Activated naive CD4-positive, alpha-beta T cell treated with anti-CD3 and anti-CD28 coated beads for 36 hours (primary cell): ENCODE measurements at regions of chr9 and their contacts with region 1.

Region 1: GRCh38 chr9:125746017-125746773 is 978 bp upstream of the PBX3 start:
- DNase-seq: peak; percentile 93
- H3K4me3 Mint-ChIP-seq: peak overlapping the region; percentile 91
- H3K27ac Mint-ChIP-seq: peak overlapping the region; percentile 90
- H3K4me1 Mint-ChIP-seq: peaks cover 25% of the 10 kb centered on the region
- H3K27me3 Mint-ChIP-seq: peaks cover 6% of the 10 kb centered on the region

Region 2: DNA sequence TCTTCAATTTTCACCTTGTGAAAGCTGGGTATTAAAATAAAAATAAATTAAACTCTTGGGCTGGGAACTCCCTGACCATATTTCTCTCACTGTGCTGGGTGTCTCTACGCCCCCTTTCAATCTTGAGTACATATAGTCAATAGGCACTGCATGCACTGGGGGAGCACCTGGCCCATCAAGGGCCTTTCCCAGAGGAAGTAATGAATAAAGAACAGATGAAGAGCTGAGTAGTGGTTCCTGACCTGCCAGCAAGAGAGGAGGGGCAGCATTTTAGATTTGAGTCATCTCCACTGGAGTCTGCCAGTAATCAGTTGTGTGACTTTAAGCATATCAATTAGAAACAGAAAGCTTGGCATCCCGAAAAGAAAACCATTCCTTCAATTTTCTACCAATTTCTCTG is 45.4 kb before region 1 on chr9:
- CTCF ChIA-PET with region 1: no interaction called
- intact Hi-C with region 1: loop called (anchors 1 kb)
- DNase-seq: peak; percentile 80
- H3K4me3 Mint-ChIP-seq: no peak overlapping the region
- H3K27ac Mint-ChIP-seq: peak overlapping the region; percentile 47
- H3K4me1 Mint-ChIP-seq: peaks cover 58% of the 10 kb centered on the region
- H3K27me3 Mint-ChIP-seq: no peaks in the 10 kb centered on the region

Region 3: GRCh38 chr9:125706661-125707471 is 39.3 kb before region 1 on chr9 and contains the start of gene MAPKAP1:
- CTCF ChIA-PET with region 1: no interaction called
- intact Hi-C with region 1: loop called (anchors 1 kb)
- DNase-seq: peak; percentile 96
- H3K4me3 Mint-ChIP-seq: peak within 1 kb of the TSS; percentile 83
- H3K27ac Mint-ChIP-seq: peak within 1 kb of the TSS; percentile 87
- H3K4me1 Mint-ChIP-seq: peaks cover 38% of the 10 kb centered on the region
- H3K27me3 Mint-ChIP-seq: no peaks in the 10 kb centered on the region
- total RNA-seq, gene MAPKAP1: 54.8 to 57.4 TPM

Region 4: GRCh38 chr9:125732562-125732961 is 13.6 kb before region 1 on chr9:
- CTCF ChIA-PET with region 1: no interaction called
- intact Hi-C with region 1: no loop called
- DNase-seq: no peak
- H3K4me3 Mint-ChIP-seq: no peak overlapping the region
- H3K27ac Mint-ChIP-seq: no peak overlapping the region
- H3K4me1 Mint-ChIP-seq: no peaks in the 10 kb centered on the region
- H3K27me3 Mint-ChIP-seq: no peaks in the 10 kb centered on the region

Region 5: DNA sequence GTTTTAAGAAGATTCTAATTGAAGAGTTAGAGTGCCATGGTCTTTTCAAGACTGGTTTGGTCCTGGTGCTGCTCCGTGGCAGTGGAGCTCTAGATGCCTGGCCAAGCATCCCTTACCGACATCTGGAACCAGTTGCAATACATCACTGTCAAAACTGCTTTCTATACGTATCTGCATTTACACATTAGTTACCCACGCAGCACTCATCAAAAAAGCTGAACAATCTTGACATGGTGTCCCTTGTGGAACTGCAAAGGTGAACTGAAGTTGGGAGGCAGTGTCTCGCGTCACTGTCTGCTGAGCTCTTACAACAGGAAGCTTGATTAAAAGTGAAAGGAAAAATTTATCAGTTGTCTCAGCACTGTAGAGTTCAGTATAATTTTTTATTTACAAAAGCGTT is 83.5 kb after region 1 on chr9:
- CTCF ChIA-PET with region 1: no interaction called
- intact Hi-C with region 1: loop called (anchors 1 kb)
- DNase-seq: peak; percentile 73
- H3K4me3 Mint-ChIP-seq: peak overlapping the region; percentile 77
- H3K27ac Mint-ChIP-seq: peak overlapping the region; percentile 84
- H3K4me1 Mint-ChIP-seq: peaks cover 29% of the 10 kb centered on the region
- H3K27me3 Mint-ChIP-seq: no peaks in the 10 kb centered on the region